CD4-positive, alpha-beta memory T cell (primary cell): ENCODE measurements at regions of chr13 and their contacts with region 1.

Region 1: DNA sequence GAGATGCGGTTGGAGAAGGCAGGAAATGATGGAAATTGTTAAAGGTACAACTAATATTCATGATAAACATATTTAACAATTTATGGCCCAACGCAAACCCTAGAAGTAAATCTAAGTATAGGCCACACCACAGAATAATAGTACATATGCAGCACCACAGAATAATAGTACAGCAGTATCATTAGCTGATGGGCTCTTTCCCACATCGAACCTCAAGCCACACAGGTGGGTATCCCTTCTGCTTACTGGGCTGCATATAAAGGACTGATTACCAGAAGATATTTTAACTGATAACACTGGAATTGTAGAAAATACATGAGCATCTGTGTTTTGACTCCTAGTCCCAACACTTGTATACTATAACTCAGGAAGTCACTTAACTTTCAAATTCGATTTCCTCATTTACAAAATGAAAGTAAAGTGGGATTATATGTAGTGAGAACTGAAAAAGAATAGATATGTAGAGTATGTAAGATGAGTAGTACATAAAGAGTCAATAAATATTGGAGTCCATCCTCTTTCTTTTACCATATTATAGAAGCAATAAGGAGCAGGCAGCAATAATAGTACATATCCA is 91.5 kb downstream of the TSC22D1 start:
- DNase-seq: no peak
- H3K4me3 ChIP-seq: no peak overlapping the region
- H3K4me3 Mint-ChIP-seq: peak overlapping the region; percentile 9 to 84 (median 64)
- H3K27ac ChIP-seq: no peak overlapping the region
- H3K27ac Mint-ChIP-seq: peak overlapping the region in 3 of 7 donors; percentile 7 to 73 (median 70)
- H3K4me1 ChIP-seq: peaks cover 17% of the 10 kb centered on the region
- H3K4me1 Mint-ChIP-seq: peaks cover 11 to 22% (median 12%) of the 10 kb centered on the region in 4 donors
- H3K27me3 ChIP-seq: no peaks in the 10 kb centered on the region
- H3K27me3 Mint-ChIP-seq: no peaks in the 10 kb centered on the region

Region 2: GRCh38 chr13:44331912-44332851 is 152.5 kb before region 1 on chr13:
- CTCF ChIA-PET with region 1: no interaction called
- POLR2A ChIA-PET with region 1: no interaction called
- intact Hi-C with region 1: no loop called
- DNase-seq: no peak
- H3K4me3 ChIP-seq: no peak overlapping the region
- H3K4me3 Mint-ChIP-seq: no peak overlapping the region
- H3K27ac ChIP-seq: no peak overlapping the region
- H3K27ac Mint-ChIP-seq: no peak overlapping the region
- H3K4me1 ChIP-seq: no peaks in the 10 kb centered on the region
- H3K4me1 Mint-ChIP-seq: peaks cover 0 to 1% (median 0%) of the 10 kb centered on the region in 4 donors
- H3K27me3 ChIP-seq: no peaks in the 10 kb centered on the region
- H3K27me3 Mint-ChIP-seq: peaks cover 5 to 13% of the 10 kb centered on the region in 2 donors

Region 3: DNA sequence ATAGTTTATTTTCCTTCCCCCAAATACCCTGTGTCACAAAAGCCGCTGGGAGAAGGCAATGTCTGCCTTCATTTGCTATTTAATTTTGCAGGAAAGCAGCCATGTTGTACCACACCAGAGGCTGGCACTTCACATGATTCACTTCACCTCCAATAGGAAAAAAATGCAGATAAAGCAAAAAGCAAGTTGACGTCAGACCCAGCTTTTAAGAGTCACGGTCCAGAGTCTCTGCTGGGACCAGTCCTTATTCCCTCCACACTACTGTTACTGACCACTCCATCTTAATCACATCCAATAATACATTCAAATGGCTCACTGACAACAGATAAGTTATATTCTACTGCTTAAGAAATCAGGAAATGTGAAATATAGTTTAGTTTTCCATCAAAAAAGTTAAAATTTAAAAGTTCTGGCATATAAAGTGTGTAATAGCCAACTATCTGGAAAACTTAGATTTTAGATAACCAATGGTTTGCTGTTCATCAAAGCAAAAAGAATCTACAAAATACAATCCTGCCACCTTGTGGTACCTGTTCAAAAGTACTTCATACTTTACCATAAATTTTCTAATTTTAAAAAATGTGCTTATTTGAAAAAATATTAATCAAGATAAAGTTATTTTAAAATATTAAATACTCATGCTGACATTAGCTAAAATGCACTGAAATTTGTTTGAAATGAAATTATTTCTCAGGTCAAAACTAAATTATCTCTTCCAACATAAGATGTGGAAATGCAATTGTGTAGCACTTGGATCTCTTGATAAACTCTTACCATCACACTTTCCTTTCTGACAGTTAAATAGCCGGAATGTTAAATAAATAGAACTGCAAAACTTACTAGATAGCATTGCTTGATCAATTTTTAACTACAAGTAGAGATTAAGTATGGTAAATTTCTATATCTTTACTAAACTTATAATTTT is 13.8 kb before region 1 on chr13:
- CTCF ChIA-PET with region 1: interaction called, 26 read pairs
- POLR2A ChIA-PET with region 1: no interaction called
- intact Hi-C with region 1: no loop called
- DNase-seq: peak in 2 of 5 donors; percentile 16 to 20
- H3K4me3 ChIP-seq: no peak overlapping the region
- H3K4me3 Mint-ChIP-seq: no peak overlapping the region
- H3K27ac ChIP-seq: no peak overlapping the region
- H3K27ac Mint-ChIP-seq: no peak overlapping the region
- H3K4me1 ChIP-seq: no peaks in the 10 kb centered on the region
- H3K4me1 Mint-ChIP-seq: peaks cover 0 to 4% (median 0%) of the 10 kb centered on the region in 4 donors
- H3K27me3 ChIP-seq: no peaks in the 10 kb centered on the region
- H3K27me3 Mint-ChIP-seq: no peaks in the 10 kb centered on the region

Region 4: GRCh38 chr13:44648392-44649103 is 163.9 kb after region 1 on chr13:
- CTCF ChIA-PET with region 1: interaction called, 100 read pairs
- POLR2A ChIA-PET with region 1: no interaction called
- intact Hi-C with region 1: no loop called
- DNase-seq: peak in 2 of 5 donors; percentile 4 to 18
- H3K4me3 ChIP-seq: no peak overlapping the region
- H3K4me3 Mint-ChIP-seq: no peak overlapping the region
- H3K27ac ChIP-seq: no peak overlapping the region
- H3K27ac Mint-ChIP-seq: peak overlapping the region in 1 of 7 donors; percentile 47
- H3K4me1 ChIP-seq: no peaks in the 10 kb centered on the region
- H3K4me1 Mint-ChIP-seq: peaks cover 0 to 13% (median 0%) of the 10 kb centered on the region in 4 donors
- H3K27me3 ChIP-seq: no peaks in the 10 kb centered on the region
- H3K27me3 Mint-ChIP-seq: peaks cover 5 to 16% of the 10 kb centered on the region in 2 donors

Region 5: GRCh38 chr13:44969551-44970484 is 485.2 kb after region 1 on chr13:
- CTCF ChIA-PET with region 1: interaction called, 104 read pairs
- POLR2A ChIA-PET with region 1: no interaction called
- intact Hi-C with region 1: loop called (anchors 1 kb)
- DNase-seq: peak in 4 of 5 donors; percentile 13 to 28 (median 18)
- H3K4me3 ChIP-seq: no peak overlapping the region
- H3K4me3 Mint-ChIP-seq: no peak overlapping the region
- H3K27ac ChIP-seq: no peak overlapping the region
- H3K27ac Mint-ChIP-seq: no peak overlapping the region
- H3K4me1 ChIP-seq: no peaks in the 10 kb centered on the region
- H3K4me1 Mint-ChIP-seq: peaks cover 0 to 1% (median under 1%) of the 10 kb centered on the region in 4 donors
- H3K27me3 ChIP-seq: no peaks in the 10 kb centered on the region
- H3K27me3 Mint-ChIP-seq: no peaks in the 10 kb centered on the region